IMR-90 (cell line): ENCODE measurements at regions of chr1 and their contacts with region 1.

Region 1: DNA sequence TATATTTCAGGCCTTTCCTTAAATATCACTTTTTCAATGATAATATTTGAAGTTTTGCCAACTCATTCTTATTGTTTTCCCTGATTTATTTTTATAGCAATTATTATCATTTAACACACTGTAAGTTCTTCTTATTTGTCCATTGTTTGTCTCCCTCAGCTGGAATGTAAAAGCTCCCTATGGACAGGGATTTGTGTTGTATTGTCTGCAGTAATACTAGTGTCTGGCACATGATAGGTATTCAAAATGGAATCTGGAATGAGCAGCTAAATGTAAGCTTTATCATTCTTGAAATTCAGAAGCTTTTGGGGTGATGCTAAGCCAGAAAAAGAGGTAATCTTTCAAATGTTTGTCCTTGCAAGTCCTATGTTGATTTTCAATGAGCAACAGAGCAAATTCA is 112.1 kb downstream of the NEGR1 start:
- DNase-seq: no peak
- ATAC-seq: no peak
- H3K4me3 ChIP-seq: no peak overlapping the region
- H3K27ac ChIP-seq: no peak overlapping the region
- H3K4me1 ChIP-seq: no peaks in the 10 kb centered on the region
- H3K27me3 ChIP-seq: no peaks in the 10 kb centered on the region
- CTCF ChIP-seq: no peak
- POLR2A ChIP-seq: no peak
- RAD21 ChIP-seq: no peak

Region 2: DNA sequence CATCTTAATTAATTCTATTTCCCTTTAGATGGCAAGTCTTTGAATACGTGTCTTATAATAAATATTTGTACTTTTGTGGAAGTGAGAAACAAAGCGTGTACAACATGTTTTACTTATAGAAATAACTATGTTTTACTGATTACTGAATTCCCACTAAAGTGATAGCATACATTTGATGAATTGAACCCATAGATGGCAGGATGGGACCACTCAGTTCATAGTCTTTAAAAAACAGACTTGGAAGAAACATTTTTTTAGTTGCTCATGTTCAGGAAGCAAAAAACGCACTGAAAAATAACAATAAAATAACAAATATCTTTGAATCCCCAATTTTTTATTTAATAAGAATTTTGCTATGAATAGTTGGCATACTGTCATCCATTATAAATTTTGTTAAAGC is 582.3 kb before region 1 on chr1:
- CTCF ChIA-PET with region 1: no interaction called
- POLR2A ChIA-PET with region 1: no interaction called
- dilution Hi-C with region 1: no loop called
- in situ Hi-C with region 1: no loop called
- intact Hi-C with region 1: no loop called
- DNase-seq: peak; percentile 47
- ATAC-seq: 0 out of 2 replicates have a peak, but pooled peaks have one; percentile 46
- H3K4me3 ChIP-seq: no peak overlapping the region
- H3K27ac ChIP-seq: no peak overlapping the region
- H3K4me1 ChIP-seq: no peaks in the 10 kb centered on the region
- H3K27me3 ChIP-seq: no peaks in the 10 kb centered on the region
- CTCF ChIP-seq: peak; percentile 58
- POLR2A ChIP-seq: no peak
- RAD21 ChIP-seq: peak; percentile 61

Region 3: DNA sequence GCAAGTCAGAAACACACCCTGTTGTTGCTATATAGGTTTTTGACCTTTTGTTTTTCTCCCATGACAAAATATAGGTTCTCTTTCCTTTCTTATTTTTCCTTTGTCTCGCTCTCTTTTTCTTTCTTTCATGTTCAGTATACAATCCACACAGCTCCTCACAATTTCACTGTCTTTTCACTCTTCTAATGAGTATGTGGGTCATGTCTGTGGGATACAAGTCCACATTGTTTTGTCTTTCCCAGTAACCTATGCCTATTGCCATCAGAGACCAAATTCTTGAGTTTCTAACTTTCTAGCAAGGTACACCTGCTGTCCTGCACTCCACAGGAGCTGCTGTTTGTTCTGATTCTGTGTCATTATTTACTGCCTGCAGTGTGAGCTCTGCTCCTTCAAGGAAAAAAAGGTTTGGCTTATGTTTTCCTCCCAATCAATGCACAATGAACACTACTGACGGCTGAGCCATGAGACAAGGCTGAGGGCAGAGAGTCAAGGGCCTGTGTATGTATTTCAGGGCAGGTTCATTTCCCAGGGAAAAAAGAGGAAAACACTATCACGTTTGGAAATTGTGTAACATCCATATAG is 341.7 kb before region 1 on chr1:
- CTCF ChIA-PET with region 1: no interaction called
- POLR2A ChIA-PET with region 1: no interaction called
- dilution Hi-C with region 1: no loop called
- in situ Hi-C with region 1: no loop called
- intact Hi-C with region 1: no loop called
- DNase-seq: no peak
- ATAC-seq: no peak
- H3K4me3 ChIP-seq: no peak overlapping the region
- H3K27ac ChIP-seq: no peak overlapping the region
- H3K4me1 ChIP-seq: no peaks in the 10 kb centered on the region
- H3K27me3 ChIP-seq: no peaks in the 10 kb centered on the region
- CTCF ChIP-seq: no peak
- POLR2A ChIP-seq: no peak
- RAD21 ChIP-seq: no peak

Region 4: DNA sequence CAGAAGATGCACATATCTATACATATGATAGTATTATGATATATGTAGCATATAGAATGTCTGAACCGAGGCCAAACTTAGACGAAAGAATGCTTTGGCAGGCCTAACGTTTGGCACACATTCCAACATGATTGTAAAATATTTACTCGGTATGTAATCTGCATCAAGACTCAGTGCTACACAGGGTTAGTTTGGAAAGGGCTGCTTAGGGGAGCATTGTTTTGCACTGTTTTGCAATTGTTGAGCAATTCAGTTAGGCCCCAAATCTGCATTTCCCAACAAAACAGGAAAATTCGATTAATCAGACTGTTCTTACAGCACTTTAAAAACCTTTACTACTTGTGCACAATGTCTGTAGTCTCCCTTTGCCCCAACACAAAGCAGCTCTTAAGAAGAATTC is 328.1 kb after region 1 on chr1:
- CTCF ChIA-PET with region 1: no interaction called
- POLR2A ChIA-PET with region 1: no interaction called
- dilution Hi-C with region 1: no loop called
- in situ Hi-C with region 1: no loop called
- intact Hi-C with region 1: loop called (anchors 5 kb)
- DNase-seq: no peak
- ATAC-seq: peak; percentile 61; the same call in 1 of the 2 replicates
- H3K4me3 ChIP-seq: no peak overlapping the region
- H3K27ac ChIP-seq: no peak overlapping the region
- H3K4me1 ChIP-seq: no peaks in the 10 kb centered on the region
- H3K27me3 ChIP-seq: no peaks in the 10 kb centered on the region
- CTCF ChIP-seq: no peak
- POLR2A ChIP-seq: no peak
- RAD21 ChIP-seq: no peak